Heart right ventricle (tissue), 16 donors: ENCODE measurements at regions of chr18 and their contacts with region 1.

Region 1: GRCh38 chr18:22214731-22215528 is 45.5 kb downstream of the GATA6 start:
- DNase-seq: no peak
- ATAC-seq: peak in 5 of 8 donors; percentile 15 to 59 (median 36)
- H3K4me3 ChIP-seq: no peak overlapping the region
- H3K27ac ChIP-seq: peak overlapping the region in 2 of 10 donors; percentile 13 to 26
- H3K4me1 ChIP-seq: peaks cover 0 to 56% (median 33%) of the 10 kb centered on the region in 9 donors
- H3K27me3 ChIP-seq: no peaks in the 10 kb centered on the region
- CTCF ChIP-seq: no peak

Region 2: DNA sequence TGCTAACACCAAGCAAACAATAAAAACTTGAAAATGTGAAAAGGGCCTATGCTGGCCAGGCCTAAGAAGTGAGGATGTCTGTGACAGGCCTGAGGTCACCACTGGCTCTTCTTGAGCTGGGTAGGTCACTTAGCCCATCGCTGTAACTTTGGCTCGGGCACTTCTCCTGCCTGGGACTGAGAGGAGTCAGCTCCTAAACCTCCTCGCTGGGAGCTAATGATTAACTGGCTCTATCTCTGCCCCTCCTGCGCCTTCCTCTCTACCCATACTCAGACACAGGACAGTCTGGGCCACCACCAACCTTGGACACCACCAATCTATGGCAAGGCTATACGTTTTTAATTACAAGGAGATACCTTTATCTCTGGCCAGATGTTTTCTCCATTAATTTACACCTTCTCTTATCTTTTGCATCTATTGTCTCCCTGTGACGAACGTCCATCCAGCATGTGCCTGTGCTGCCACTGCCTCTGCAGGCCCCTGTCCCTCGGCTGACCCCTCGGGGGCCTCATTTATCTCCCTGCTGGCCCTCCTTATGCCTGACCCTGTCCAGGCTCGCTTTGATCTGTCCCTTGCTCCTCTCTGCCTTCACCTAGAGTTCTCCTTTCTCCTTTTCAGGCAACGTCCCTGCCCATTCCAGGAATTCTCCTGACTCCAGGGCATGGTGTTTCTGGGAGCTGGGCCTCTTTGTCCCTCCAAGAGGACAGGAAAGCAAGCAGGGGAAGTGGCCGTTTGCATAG is 194.6 kb before region 1 on chr18:
- intact Hi-C with region 1: no loop called
- DNase-seq: no peak
- ATAC-seq: no peak
- H3K4me3 ChIP-seq: no peak overlapping the region
- H3K27ac ChIP-seq: no peak overlapping the region
- H3K4me1 ChIP-seq: no peaks in the 10 kb centered on the region
- H3K27me3 ChIP-seq: no peaks in the 10 kb centered on the region
- CTCF ChIP-seq: no peak

Region 3: GRCh38 chr18:22250591-22250996 is 35.7 kb after region 1 on chr18:
- intact Hi-C with region 1: loop called in 1 of 10 experiments (anchors 5 kb)
- DNase-seq: no peak
- ATAC-seq: peak in 5 of 8 donors; percentile 17 to 52 (median 33)
- H3K4me3 ChIP-seq: no peak overlapping the region
- H3K27ac ChIP-seq: no peak overlapping the region
- H3K4me1 ChIP-seq: peaks cover 0 to 42% (median 10%) of the 10 kb centered on the region in 9 donors
- H3K27me3 ChIP-seq: no peaks in the 10 kb centered on the region
- CTCF ChIP-seq: no peak

Region 4: GRCh38 chr18:22260208-22260820 is 45.4 kb after region 1 on chr18:
- intact Hi-C with region 1: loop called in 2 of 10 experiments (anchors 5 kb)
- DNase-seq: no peak
- ATAC-seq: no peak
- H3K4me3 ChIP-seq: no peak overlapping the region
- H3K27ac ChIP-seq: no peak overlapping the region
- H3K4me1 ChIP-seq: peaks cover 0 to 36% (median 4%) of the 10 kb centered on the region in 9 donors
- H3K27me3 ChIP-seq: no peaks in the 10 kb centered on the region
- CTCF ChIP-seq: no peak